CD8-positive, alpha-beta T cell (primary cell): ENCODE measurements at regions of chr22 and their contacts with region 1.

Region 1: DNA sequence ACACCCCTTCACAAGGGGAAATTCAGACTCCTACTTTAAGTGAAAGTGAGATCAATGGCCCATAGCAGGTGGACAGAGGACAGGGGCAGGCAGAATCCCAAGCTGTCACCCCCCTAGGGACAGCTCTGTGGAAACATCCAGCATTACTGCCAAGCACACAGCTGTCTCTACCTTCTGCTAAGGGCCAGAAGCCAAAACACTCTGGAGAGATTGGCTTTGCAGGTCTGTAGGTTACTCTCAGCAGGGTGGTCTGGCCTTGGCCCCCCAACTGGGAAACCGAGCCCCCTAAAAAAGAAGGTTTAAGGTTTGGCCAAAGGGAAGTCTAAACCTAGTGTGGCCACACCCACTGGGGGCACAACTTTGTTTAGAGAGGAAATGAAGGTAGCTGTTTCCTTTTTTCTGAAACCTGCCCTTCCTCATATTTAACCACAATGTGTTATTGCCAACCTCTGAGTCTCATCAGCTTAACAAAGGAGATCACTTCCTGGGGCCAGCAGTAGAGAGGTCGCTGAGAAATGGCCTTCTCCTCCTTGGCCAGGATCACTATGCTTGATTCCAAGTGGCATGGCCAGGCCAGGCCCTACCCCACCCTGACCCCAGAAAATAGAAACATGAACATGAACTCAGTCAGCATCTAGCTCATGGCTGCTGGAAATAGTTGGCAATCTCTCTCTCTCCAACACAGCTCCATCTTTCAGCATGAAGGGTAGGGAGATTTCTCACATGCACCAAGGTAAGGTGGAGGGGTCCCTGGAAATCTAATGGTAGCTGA is 25.9 kb upstream of the SCARF2 start:
- DNase-seq: peak in 8 of 9 experiments; percentile 33 to 78 (median 60)
- ATAC-seq: peak; percentile 61
- H3K4me3 ChIP-seq: peak overlapping the region in 1 of 2 experiments; percentile 10
- H3K4me3 Mint-ChIP-seq: peak overlapping the region; percentile 74
- H3K27ac ChIP-seq: peak overlapping the region; percentile 84 to 90
- H3K27ac Mint-ChIP-seq: peak overlapping the region; percentile 98
- H3K4me1 ChIP-seq: peaks cover 57% of the 10 kb centered on the region
- H3K4me1 Mint-ChIP-seq: peaks cover 61% of the 10 kb centered on the region
- H3K27me3 ChIP-seq: no peaks in the 10 kb centered on the region
- H3K27me3 Mint-ChIP-seq: no peaks in the 10 kb centered on the region
- CTCF ChIP-seq: no peak

Region 2: DNA sequence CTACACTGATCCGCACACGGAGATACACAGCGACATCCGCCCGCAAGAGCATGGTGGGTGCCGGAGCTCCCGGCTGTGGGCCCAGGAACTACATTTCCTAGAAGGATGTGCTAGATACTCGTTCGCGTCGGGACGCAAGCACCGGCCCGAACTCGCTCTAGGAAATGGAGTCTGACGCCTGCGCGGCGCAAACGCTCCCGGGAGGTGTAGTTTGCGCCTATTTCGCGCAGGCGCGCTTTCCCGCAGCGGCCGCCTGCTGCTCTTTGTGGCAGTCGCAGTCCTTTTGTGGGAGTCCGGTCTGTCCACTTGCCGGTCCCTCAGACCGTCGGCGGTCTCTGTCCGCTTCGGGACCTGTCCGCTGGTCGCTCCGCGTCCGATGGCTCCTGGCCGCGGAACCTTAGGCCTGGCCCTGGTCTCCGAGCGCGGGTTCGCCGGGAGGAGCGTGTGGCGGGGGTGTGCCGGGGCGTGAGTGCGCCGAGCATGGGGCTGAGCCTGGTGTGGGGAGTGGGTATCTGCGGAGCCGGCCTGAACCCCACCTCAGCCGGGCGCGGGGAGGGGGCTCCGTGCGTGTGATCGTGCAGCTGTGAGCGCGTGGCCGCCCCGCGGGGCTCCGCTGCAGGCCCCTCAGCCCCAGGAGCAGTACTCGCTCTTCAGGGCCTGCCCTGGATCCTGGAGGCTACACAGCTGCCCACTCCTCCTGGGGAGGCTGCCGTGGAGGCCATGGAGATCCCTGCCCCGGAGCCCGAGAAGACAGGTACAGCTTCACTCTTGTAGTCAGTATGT is 69.4 kb before region 1 on chr22 and contains the start of gene ZNF74:
- CTCF ChIA-PET with region 1: no interaction called
- POLR2A ChIA-PET with region 1: interaction called, 17 read pairs
- intact Hi-C with region 1: no loop called
- DNase-seq: peak; percentile 68 to 95 (median 84)
- ATAC-seq: peak; percentile 98
- H3K4me3 ChIP-seq: peak within 1 kb of the TSS; percentile 69 to 86
- H3K4me3 Mint-ChIP-seq: peak within 1 kb of the TSS; percentile 87
- H3K27ac ChIP-seq: peak within 1 kb of the TSS; percentile 46 to 79
- H3K27ac Mint-ChIP-seq: peak within 1 kb of the TSS; percentile 95
- H3K4me1 ChIP-seq: peaks cover 21% of the 10 kb centered on the region
- H3K4me1 Mint-ChIP-seq: peaks cover 37% of the 10 kb centered on the region
- H3K27me3 ChIP-seq: no peaks in the 10 kb centered on the region
- H3K27me3 Mint-ChIP-seq: no peaks in the 10 kb centered on the region
- CTCF ChIP-seq: no peak
- total RNA-seq, gene ZNF74: 1.9 to 2.1 TPM

Region 3: DNA sequence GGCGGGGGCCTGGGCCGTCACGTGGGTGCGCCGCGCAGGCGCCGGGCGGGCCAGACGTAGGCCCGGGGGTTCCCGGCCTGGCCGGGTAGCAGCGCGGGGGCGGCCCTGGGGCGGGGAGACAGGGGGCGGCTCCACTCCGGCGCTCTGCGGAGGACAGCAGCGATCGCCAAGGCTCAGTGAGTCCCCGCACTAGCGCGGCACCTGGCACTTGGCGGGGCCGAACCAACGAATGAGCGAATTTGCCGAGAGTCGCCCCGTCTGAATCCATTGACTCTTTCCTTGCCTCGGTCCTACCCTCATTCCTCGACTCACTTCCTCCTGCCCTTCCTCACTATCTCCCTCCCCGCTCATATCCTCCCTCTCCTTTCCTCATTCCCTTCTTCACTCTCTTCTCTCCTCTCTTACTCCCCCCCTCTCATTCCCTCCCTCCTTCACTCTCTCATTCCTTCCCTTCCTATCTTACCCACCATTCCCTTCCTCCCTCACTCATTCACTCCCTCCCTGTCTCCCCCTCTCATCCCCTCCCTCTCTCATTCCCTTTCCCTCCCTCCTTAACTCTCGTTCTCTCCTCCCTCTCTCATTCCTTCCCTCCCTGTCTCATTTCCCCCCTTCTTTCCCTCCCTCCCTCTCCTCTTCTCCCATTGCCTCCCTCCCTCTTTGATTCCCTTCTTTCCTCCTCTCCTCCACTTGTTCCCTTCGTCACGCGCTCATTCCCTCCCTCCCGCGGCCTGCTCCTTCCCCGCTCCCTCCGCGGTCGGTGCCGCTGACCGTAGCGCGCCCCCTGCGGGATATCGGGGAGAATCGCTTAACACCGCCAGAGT is 32.6 kb after region 1 on chr22:
- CTCF ChIA-PET with region 1: interaction called, 4 read pairs
- POLR2A ChIA-PET with region 1: interaction called, 18 read pairs
- intact Hi-C with region 1: loop called (anchors 1 to 2 kb)
- DNase-seq: peak; percentile 83 to 96 (median 91)
- ATAC-seq: peak; percentile 96
- H3K4me3 ChIP-seq: peak overlapping the region; percentile 75 to 83
- H3K4me3 Mint-ChIP-seq: peak overlapping the region; percentile 89
- H3K27ac ChIP-seq: peak overlapping the region; percentile 61 to 98
- H3K27ac Mint-ChIP-seq: peak overlapping the region; percentile 91
- H3K4me1 ChIP-seq: peaks cover 42% of the 10 kb centered on the region
- H3K4me1 Mint-ChIP-seq: peaks cover 41% of the 10 kb centered on the region
- H3K27me3 ChIP-seq: no peaks in the 10 kb centered on the region
- H3K27me3 Mint-ChIP-seq: no peaks in the 10 kb centered on the region
- CTCF ChIP-seq: peak; percentile 95

Region 4: GRCh38 chr22:20550821-20551744 is 87.6 kb after region 1 on chr22:
- CTCF ChIA-PET with region 1: no interaction called
- POLR2A ChIA-PET with region 1: interaction called, 12 read pairs
- intact Hi-C with region 1: no loop called
- DNase-seq: peak; percentile 41 to 87 (median 68)
- ATAC-seq: peak; percentile 61
- H3K4me3 ChIP-seq: peak overlapping the region; percentile 18 to 46
- H3K4me3 Mint-ChIP-seq: peak overlapping the region; percentile 89
- H3K27ac ChIP-seq: peak overlapping the region; percentile 86 to 87
- H3K27ac Mint-ChIP-seq: peak overlapping the region; percentile 97
- H3K4me1 ChIP-seq: peaks cover 92% of the 10 kb centered on the region
- H3K4me1 Mint-ChIP-seq: peaks cover 90% of the 10 kb centered on the region
- H3K27me3 ChIP-seq: no peaks in the 10 kb centered on the region
- H3K27me3 Mint-ChIP-seq: no peaks in the 10 kb centered on the region
- CTCF ChIP-seq: no peak